ENCODE measurements at regions of chr7 and their contacts with region 1.

Region 1: DNA sequence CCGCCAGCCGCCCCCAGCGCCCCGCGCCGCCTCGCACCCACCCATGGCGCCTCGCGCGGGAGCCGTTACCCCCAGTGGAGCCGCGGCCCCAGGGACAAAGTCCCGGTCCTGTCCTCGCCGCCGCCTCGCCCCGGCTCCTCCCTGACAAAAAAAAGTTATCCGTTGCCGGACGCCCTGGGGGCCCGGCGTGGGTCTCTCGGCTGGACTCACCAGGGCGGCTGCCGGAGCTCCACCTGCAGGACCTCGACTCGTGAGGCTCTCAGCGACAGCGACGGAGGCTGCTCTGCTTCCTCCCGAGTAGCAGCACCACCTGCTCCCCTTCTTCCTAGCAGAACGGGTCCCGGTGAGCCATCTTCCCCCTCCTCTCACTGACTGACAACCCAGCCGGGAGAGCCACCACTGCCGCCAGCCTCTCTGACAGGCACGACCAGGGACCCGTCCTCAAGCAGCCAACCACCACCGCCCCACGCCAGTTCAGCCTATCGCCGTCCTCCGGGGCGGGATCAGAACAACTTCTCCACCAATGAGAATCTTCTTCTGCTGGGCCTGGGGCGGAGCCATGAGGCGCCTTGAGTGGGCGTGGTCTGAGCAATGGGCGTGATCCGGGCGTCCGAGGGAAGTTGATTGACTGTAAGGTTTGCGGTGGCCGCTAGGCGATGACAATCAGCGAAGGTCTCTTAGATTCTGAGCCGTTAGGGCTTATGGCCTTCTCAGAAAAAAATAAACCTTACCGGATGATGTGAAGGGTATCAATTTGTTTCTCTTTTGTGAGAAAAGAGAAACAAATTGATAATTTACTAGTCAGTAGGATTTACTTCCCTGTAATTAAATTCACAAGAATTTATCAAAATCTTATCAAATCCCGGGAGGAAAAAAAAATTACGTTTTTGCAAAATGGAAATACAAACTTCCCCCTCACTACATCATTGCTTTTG is at the start of gene HYCC1:
- DNase-seq: peak; percentile 99
- H3K4me3 Mint-ChIP-seq: peak within 1 kb of the TSS; percentile 93
- H3K27ac Mint-ChIP-seq: peak within 1 kb of the TSS; percentile 94
- H3K4me1 Mint-ChIP-seq: peaks cover 34% of the 10 kb centered on the region
- H3K27me3 Mint-ChIP-seq: no peaks in the 10 kb centered on the region
- total RNA-seq, gene HYCC1: 36.8 and 45.7 TPM in 2 replicates

Region 2: DNA sequence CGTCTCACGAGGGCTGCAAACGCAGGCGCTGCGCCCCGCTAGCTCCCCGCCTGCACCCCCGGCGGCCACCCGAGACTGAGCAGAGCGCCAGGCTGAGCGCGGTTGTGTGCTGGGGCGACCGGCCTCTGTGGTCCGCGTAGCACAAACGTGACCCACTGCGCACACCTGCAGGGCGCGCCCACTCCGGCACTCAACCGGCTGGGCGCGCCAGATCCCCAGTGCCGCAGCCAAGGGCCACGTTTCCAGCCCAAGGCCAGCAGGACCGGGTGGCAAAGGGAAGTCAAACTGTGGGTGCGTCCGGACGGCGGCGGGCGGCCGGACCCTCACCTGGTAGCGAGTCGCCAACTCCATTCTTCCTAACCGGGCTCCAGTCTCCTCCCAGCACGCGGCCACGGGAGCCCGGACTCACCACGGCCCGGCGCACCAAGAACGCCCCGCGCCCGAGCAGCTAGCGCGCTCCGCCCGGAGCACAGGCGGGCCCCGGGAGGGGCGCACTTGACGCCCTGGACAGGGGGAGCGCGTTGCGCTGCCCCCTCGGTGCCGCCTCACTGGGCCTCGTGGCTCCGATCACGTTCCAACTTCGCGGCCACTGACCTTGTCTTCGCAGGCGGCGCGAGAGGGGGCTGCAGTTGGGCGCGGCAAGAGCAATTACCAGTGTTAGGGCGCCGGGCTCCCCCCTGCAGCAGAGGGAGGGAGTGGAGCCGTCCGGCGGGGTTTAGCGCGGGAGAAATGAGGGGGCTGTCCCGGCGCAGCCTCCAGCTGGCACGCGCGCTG is 1068.3 kb before region 1 on chr7 and contains the start of gene CDCA7L:
- intact Hi-C with region 1: loop called (anchors 10 kb)
- DNase-seq: peak; percentile 54
- H3K4me3 Mint-ChIP-seq: peak within 1 kb of the TSS; percentile 94
- H3K27ac Mint-ChIP-seq: peak within 1 kb of the TSS; percentile 95
- H3K4me1 Mint-ChIP-seq: peaks cover 69% of the 10 kb centered on the region
- H3K27me3 Mint-ChIP-seq: peaks cover 16% of the 10 kb centered on the region
- total RNA-seq, gene CDCA7L: 102 and 113 TPM in 2 replicates

Region 3: DNA sequence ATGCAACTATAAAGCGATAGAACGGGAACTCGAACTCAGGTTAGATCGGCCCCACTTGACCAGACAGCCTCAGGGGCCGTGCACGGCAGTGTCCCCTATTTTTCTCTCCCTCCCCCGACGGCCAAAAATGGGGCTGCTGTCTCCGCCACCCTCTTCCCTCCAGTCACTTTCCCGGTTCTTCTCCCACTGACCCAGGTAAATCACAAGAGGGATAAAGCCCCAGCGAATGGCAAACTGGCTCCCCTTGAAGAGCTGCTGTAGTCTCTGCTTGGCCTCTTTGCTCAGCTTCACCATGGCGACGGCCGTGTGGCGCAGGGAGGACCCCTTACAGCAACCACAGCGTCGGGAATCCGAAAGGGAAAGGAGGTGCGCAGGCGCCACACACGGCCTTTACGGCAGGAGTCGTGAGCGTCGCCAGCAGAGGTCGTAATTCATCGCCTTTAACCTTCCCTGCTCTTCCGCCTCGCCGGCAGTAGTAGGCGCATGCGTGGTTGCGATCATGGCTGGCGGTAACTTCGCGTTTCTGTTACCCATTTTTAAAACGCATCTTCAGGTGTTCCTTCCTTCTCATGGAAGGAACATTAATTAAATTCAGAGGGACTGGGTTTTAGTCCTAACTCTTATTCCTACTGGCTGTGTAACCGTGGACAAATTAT is 191.4 kb before region 1 on chr7 and contains the start of gene TOMM7:
- intact Hi-C with region 1: loop called (anchors 1 kb)
- DNase-seq: peak; percentile 81
- H3K4me3 Mint-ChIP-seq: peak within 1 kb of the TSS; percentile 98
- H3K27ac Mint-ChIP-seq: peak within 1 kb of the TSS; percentile 93
- H3K4me1 Mint-ChIP-seq: peaks cover 41% of the 10 kb centered on the region
- H3K27me3 Mint-ChIP-seq: peaks cover 17% of the 10 kb centered on the region
- total RNA-seq, gene TOMM7: 187 and 225 TPM in 2 replicates

Region 4: GRCh38 chr7:22885797-22886261 is 128.2 kb before region 1 on chr7:
- intact Hi-C with region 1: loop called (anchors 1 kb)
- DNase-seq: peak; percentile 60
- H3K4me3 Mint-ChIP-seq: peak overlapping the region; percentile 59
- H3K27ac Mint-ChIP-seq: peak overlapping the region; percentile 93
- H3K4me1 Mint-ChIP-seq: peaks cover 41% of the 10 kb centered on the region
- H3K27me3 Mint-ChIP-seq: no peaks in the 10 kb centered on the region

Region 5: GRCh38 chr7:23003505-23004246 is 10.3 kb before region 1 on chr7:
- intact Hi-C with region 1: loop called (anchors 1 kb)
- DNase-seq: no peak
- H3K4me3 Mint-ChIP-seq: no peak overlapping the region
- H3K27ac Mint-ChIP-seq: no peak overlapping the region
- H3K4me1 Mint-ChIP-seq: peaks cover 60% of the 10 kb centered on the region
- H3K27me3 Mint-ChIP-seq: no peaks in the 10 kb centered on the region

Region 6: DNA sequence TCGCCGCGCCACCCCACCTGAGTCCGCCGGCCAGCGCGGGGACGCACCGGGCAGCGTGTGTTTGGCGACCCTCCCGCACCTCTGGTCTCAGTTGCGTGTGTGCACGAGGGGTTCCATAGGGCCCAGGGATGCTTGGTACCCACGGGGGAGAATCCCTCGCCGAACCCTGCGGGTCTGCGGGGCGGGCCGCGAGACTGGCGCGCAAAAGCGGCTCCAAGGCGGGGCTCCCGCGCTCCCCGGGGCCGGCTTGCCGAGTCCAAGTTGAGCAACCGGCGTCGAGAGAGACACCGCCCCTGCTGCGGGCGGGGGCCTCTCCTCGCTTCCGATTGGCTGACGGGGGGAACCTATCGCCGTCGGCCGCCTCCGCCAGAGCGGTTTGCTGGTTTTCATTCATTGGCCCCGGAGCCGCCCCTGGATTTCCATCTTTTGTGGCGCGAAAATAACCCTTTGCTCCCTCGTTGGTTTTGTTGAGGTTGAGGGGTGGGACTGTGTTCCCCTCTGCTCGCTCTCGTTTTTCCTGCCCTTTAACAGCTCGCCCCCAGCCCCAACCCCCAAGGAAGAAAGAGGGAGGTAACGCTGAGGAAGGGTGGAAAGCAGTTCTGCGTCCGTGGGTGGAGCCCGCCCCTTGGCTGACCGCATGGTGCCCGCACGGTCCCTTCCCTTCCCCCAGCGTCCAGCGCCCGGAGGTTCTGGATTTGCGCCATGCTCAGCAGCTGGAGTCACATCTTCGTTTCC is 460.3 kb after region 1 on chr7:
- intact Hi-C with region 1: loop called (anchors 5 kb)
- DNase-seq: peak; percentile 89
- H3K4me3 Mint-ChIP-seq: peak overlapping the region; percentile 83
- H3K27ac Mint-ChIP-seq: peak overlapping the region; percentile 57
- H3K4me1 Mint-ChIP-seq: peaks cover 39% of the 10 kb centered on the region
- H3K27me3 Mint-ChIP-seq: peaks cover 63% of the 10 kb centered on the region

Region 7: DNA sequence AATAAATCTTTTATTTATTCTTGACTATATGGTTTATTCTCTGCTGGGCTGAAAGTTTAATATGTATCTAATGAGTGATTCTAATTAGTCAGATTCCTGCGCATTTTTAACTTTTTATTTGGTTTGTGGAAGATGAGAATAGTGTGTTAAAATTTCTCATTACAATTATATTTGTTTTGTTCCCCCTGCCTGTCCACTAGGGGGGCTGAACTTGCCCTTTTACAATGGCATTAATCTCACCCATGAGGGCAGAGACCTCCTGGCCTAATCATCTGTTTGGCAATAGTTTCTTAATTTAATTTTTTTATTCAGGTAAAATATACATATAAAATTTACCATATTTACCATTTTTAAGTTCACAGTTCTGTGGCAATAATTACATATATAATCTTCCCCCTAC is 991.5 kb after region 1 on chr7:
- intact Hi-C with region 1: no loop called
- DNase-seq: no peak
- H3K4me3 Mint-ChIP-seq: no peak overlapping the region
- H3K27ac Mint-ChIP-seq: no peak overlapping the region
- H3K4me1 Mint-ChIP-seq: no peaks in the 10 kb centered on the region
- H3K27me3 Mint-ChIP-seq: peaks cover 4% of the 10 kb centered on the region

Measured in activated T-helper 1 cell treated with anti-CD3 and anti-CD28 coated beads, Interleukin-12 subunit alpha, Interleukin-12 subunit beta, Interleukin-2, Interleukin-4 antibody, amounts not matched to agents 30 ng/mL and 10 ng/mL and 1 ng/mL, durations not matched to agents 14 hours and 24 hours and 36 hours (primary cell).